ENCODE measurements at regions of chr18 and their contacts with region 1.

Region 1: DNA sequence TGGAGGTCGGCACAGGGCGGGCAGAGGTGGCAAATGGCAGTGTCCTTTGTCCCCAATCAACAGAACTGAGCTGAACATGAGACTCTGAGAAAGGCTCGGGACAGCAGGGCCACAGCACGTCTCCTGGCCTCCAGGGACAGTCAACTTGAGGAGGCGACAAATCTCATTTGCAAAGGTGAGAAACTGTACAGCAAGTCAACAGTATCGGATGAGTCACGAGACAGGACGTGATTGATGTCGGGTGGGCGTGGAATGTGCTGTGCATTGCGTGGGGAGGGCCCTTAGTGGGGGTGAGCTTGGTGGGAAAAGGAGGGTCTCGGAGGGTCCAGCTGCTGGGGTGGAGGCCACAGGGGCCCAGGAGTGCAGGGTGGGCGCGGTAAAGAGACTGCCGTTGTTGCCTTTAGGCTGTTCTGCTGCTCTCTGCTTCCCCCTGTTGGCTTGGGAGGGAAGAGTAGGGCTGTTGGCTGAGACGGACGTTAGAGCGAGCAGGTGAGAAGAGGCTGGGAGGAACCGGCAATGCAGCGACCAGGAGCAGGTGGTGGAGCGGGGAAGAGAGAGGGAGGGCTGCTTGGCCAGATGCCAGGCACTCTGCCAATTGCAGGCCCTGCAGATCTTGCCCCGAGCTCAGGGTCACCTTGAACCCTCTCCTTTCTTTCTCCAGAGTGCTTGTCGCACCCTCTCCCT is 164.3 kb downstream of the BCL2 start:
- DNase-seq: peak; percentile 90
- ATAC-seq: peak; percentile 65
- H3K4me3 ChIP-seq: peak overlapping the region in 4 of 5 experiments; percentile 15 to 48 (median 34)
- H3K4me3 Mint-ChIP-seq: peak overlapping the region; percentile 80
- H3K27ac ChIP-seq: peak overlapping the region; percentile 57 to 89
- H3K27ac Mint-ChIP-seq: peak overlapping the region; percentile 96
- H3K4me1 ChIP-seq: peaks cover 69 to 70% of the 10 kb centered on the region in 2 donors
- H3K4me1 Mint-ChIP-seq: peaks cover 95% of the 10 kb centered on the region
- H3K27me3 ChIP-seq: no peaks in the 10 kb centered on the region
- H3K27me3 Mint-ChIP-seq: no peaks in the 10 kb centered on the region
- CTCF ChIP-seq: peak; percentile 84

Region 2: GRCh38 chr18:63131106-63131958 is 24.0 kb before region 1 on chr18:
- CTCF ChIA-PET with region 1: interaction called, 160 read pairs
- POLR2A ChIA-PET with region 1: no interaction called
- intact Hi-C with region 1: loop called (anchors 1 kb)
- DNase-seq: peak; percentile 79
- ATAC-seq: peak; percentile 69
- H3K4me3 ChIP-seq: no peak overlapping the region
- H3K4me3 Mint-ChIP-seq: no peak overlapping the region
- H3K27ac ChIP-seq: peak overlapping the region in 1 of 2 donors; percentile 22
- H3K27ac Mint-ChIP-seq: peak overlapping the region; percentile 86
- H3K4me1 ChIP-seq: peaks cover 4 to 8% of the 10 kb centered on the region in 2 donors
- H3K4me1 Mint-ChIP-seq: peaks cover 30% of the 10 kb centered on the region
- H3K27me3 ChIP-seq: no peaks in the 10 kb centered on the region
- H3K27me3 Mint-ChIP-seq: no peaks in the 10 kb centered on the region
- CTCF ChIP-seq: peak; percentile 80

Region 3: DNA sequence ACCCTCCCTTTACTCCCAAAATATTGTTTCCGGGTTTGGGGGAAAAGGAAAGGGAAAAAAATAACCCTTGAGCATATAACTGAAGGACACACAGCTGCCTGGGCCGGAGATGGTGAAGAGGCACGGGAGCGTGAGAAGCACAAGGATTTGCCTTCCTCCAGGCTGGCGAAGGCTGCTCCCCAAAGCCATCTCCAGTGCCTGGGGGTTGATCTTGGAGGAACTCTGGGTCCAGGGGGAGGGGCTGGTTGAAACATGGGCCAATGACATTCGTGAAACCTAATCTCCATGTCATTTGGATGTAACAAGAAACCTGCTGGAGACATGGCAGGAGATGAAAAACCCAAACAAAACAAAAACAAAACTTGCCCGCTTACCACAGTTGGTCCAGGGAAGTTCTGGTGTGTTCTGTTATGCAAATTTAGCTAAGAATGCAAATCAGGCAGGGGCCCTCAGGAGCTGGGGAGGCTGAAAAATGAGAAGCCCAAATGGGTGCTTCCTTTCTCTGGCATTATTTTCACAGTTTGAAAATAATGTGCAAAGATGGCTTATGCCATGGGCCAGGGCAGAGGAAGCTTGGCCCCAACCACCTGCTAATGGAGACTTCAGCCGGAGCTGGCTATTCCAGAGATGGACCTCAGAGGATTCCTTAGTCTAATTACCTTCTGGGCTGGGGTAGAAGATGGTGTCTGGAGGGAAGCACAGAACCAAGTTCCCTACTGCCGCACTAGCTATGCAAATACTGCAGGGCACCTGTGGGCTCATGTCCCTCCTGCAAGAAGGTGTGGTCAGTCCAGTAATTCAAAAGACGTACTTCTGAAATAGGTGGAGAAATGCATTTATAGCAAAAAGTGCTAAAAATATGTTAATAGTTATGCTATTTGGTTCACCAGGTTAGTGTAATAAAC is 16.6 kb before region 1 on chr18:
- CTCF ChIA-PET with region 1: interaction called, 160 read pairs
- POLR2A ChIA-PET with region 1: interaction called, 15 read pairs
- intact Hi-C with region 1: loop called (anchors 1 kb)
- DNase-seq: peak; percentile 80
- ATAC-seq: peak; percentile 57
- H3K4me3 ChIP-seq: peak overlapping the region; percentile 27 to 67 (median 56)
- H3K4me3 Mint-ChIP-seq: peak overlapping the region; percentile 95
- H3K27ac ChIP-seq: peak overlapping the region; percentile 73 to 84
- H3K27ac Mint-ChIP-seq: peak overlapping the region; percentile 98
- H3K4me1 ChIP-seq: peaks cover 63 to 67% of the 10 kb centered on the region in 2 donors
- H3K4me1 Mint-ChIP-seq: peaks cover 84% of the 10 kb centered on the region
- H3K27me3 ChIP-seq: no peaks in the 10 kb centered on the region
- H3K27me3 Mint-ChIP-seq: no peaks in the 10 kb centered on the region
- CTCF ChIP-seq: no peak

Region 4: GRCh38 chr18:63192885-63193349 is 37.6 kb after region 1 on chr18:
- CTCF ChIA-PET with region 1: interaction called, 4 read pairs
- POLR2A ChIA-PET with region 1: interaction called, 3 read pairs
- intact Hi-C with region 1: loop called (anchors 2 kb)
- DNase-seq: peak; percentile 61
- ATAC-seq: peak; percentile 45
- H3K4me3 ChIP-seq: no peak overlapping the region
- H3K4me3 Mint-ChIP-seq: peak overlapping the region; percentile 21
- H3K27ac ChIP-seq: peak overlapping the region; percentile 5 to 61
- H3K27ac Mint-ChIP-seq: peak overlapping the region; percentile 66
- H3K4me1 ChIP-seq: peaks cover 22 to 37% of the 10 kb centered on the region in 2 donors
- H3K4me1 Mint-ChIP-seq: peaks cover 46% of the 10 kb centered on the region
- H3K27me3 ChIP-seq: no peaks in the 10 kb centered on the region
- H3K27me3 Mint-ChIP-seq: no peaks in the 10 kb centered on the region
- CTCF ChIP-seq: no peak

Region 5: DNA sequence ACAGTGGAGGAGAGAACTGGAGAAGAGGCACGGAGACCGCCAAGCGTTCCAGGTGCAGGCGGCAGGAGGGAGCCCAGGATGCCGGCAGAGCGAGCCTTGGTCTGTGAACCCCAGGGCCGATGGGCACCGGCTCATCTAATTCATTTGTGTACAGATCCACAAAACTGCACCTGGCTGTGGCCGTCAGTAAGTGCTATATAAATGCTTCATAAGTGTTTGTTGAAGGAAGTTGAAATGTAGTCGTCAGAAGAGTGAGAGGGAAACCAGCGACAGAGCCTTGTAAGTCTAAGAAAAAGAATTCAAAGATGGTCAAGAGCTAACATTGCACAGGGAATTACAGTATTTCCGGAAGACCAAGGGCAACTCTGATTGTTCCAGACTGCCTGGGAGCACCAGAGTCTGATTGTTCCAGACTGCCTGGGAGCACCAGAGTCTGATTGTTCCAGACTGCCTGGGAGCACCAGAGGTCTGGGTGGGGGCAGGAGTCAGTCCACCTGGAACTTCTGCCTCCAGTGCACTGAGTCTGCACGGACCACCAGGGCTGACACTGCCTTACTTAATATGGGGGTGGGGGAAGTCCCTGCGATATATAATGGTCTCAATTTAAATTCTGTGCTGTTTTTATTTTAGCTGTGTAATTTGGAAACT is 52.0 kb after region 1 on chr18:
- CTCF ChIA-PET with region 1: interaction called, 4 read pairs
- POLR2A ChIA-PET with region 1: no interaction called
- intact Hi-C with region 1: loop called (anchors 1 kb)
- DNase-seq: peak; percentile 44
- ATAC-seq: peak; percentile 55
- H3K4me3 ChIP-seq: peak overlapping the region in 2 of 5 experiments; percentile 15 to 31
- H3K4me3 Mint-ChIP-seq: peak overlapping the region; percentile 75
- H3K27ac ChIP-seq: peak overlapping the region; percentile 26 to 52
- H3K27ac Mint-ChIP-seq: peak overlapping the region; percentile 79
- H3K4me1 ChIP-seq: peaks cover 57 to 58% of the 10 kb centered on the region in 2 donors
- H3K4me1 Mint-ChIP-seq: peaks cover 80% of the 10 kb centered on the region
- H3K27me3 ChIP-seq: no peaks in the 10 kb centered on the region
- H3K27me3 Mint-ChIP-seq: no peaks in the 10 kb centered on the region
- CTCF ChIP-seq: no peak

Region 6: DNA sequence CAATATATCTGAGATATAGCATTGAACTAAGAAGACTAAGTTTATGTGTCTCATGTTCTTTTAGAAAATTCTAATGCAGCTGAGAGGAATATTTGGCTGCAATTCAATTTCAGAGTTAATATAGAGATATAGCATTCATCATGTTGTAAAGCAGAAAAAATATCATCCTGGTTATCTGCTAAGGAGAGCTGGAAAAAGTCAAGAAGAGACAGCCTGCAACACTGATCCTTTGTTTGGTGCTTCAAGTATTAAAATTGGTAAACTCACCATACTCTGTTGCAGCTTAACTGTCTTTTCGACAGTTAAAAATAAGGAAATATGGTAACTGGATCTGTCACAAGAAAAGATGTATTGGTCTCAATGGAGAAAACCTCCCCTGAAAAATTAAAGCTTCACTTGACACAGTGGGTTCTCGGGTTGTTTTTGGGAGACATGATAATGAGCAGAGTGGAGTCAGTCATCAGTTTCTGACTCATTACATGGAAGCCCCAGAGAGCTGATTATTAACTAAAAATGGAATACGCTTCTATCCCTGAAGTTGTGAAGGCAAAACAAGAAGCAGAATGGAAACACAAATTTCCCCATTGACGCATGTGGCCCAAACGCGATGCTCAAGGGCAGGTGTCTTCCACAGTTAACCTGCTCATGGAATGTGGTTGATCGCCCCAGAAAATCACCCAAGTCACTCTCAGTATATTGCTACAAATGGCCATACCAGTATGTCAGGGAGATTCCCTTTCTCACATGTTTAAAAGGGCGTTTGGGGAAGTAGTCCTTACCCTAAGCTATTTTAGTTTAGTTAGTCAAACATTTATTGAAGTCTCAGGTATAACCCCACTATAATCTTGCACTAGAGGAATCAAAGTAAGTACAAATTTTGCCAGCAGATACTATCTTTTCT is 156.1 kb after region 1 on chr18:
- CTCF ChIA-PET with region 1: interaction called, 16 read pairs
- POLR2A ChIA-PET with region 1: interaction called, 6 read pairs
- intact Hi-C with region 1: no loop called
- DNase-seq: peak; percentile 84
- ATAC-seq: peak; percentile 74
- H3K4me3 ChIP-seq: peak overlapping the region in 4 of 5 experiments; percentile 4 to 98 (median 30)
- H3K4me3 Mint-ChIP-seq: peak overlapping the region; percentile 81
- H3K27ac ChIP-seq: peak overlapping the region; percentile 68 to 92
- H3K27ac Mint-ChIP-seq: peak overlapping the region; percentile 92
- H3K4me1 ChIP-seq: peaks cover 77 to 85% of the 10 kb centered on the region in 2 donors
- H3K4me1 Mint-ChIP-seq: peaks cover 92% of the 10 kb centered on the region
- H3K27me3 ChIP-seq: no peaks in the 10 kb centered on the region
- H3K27me3 Mint-ChIP-seq: no peaks in the 10 kb centered on the region
- CTCF ChIP-seq: no peak

Measured in B cell (primary cell).